HEK293 (cell line): ENCODE measurements at regions of chr2 and their contacts with region 1.

Region 1: DNA sequence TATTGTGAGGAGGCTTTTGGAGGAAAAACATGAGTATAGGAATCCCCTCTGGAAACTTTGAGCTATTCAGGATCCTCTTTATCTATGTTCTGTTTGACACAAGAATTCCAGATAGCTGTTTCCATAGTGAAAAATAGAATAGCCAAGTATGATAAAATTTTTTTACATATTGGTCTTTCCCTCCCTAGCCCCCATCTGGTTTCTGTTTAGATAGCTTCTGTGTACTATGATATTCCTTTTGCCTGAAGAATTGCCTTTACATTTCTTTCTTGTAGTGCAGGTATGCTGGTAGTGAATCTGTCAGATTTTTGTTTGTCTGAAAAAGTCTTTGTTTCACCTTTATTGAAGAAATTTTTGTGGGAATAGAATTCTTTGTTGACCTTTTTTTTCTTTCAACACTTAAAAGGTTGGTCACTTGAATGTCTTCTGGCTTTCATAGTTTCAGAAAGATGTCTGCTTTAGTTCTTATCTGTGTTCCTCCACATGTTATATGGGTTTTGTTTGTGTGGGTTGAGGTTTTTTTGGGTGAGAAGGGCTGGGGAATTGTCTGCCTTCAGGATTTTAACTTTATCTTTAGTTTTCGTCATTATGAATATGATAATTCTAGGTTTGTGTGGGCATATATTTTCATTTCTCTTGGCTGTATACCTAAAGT is 29.9 kb upstream of the FBLN7 start:
- H3K4me3 ChIP-seq: no peak overlapping the region
- H3K27ac ChIP-seq: no peak overlapping the region
- H3K4me1 ChIP-seq: no peaks in the 10 kb centered on the region
- CTCF ChIP-seq: no peak

Region 2: DNA sequence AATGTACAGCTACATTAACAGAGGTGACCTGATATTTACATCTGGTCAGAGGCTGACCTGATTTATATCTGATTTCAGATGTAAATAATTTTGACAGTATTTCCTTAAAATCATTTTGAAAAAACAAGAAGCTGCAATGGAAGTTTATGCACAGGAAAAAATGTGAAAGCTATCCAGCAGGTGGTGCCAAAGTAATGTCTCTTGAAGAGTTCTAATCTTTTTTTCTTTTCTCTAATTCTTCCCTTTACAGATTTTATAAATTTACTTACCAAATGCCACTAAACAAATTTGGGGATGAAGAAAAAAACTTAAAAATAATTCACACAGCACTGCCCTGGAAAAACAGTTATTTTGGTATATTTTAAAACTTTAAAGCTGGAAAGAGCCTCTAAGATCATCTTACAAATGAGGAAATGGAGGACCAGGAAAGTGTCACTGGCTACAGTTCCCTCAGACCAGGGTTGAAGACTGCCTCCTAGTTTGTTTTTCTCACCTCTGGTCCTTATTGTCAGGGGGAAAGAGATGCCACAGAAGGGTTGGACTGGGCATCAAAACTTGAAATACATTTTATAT is 13.5 kb after region 1 on chr2:
- CTCF ChIA-PET with region 1: interaction called, 11 read pairs
- POLR2A ChIA-PET with region 1: no interaction called
- H3K4me3 ChIP-seq: no peak overlapping the region
- H3K27ac ChIP-seq: no peak overlapping the region
- H3K4me1 ChIP-seq: no peaks in the 10 kb centered on the region
- CTCF ChIP-seq: no peak